ENCODE measurements at regions of chr3 and their contacts with region 1.

Region 1: DNA sequence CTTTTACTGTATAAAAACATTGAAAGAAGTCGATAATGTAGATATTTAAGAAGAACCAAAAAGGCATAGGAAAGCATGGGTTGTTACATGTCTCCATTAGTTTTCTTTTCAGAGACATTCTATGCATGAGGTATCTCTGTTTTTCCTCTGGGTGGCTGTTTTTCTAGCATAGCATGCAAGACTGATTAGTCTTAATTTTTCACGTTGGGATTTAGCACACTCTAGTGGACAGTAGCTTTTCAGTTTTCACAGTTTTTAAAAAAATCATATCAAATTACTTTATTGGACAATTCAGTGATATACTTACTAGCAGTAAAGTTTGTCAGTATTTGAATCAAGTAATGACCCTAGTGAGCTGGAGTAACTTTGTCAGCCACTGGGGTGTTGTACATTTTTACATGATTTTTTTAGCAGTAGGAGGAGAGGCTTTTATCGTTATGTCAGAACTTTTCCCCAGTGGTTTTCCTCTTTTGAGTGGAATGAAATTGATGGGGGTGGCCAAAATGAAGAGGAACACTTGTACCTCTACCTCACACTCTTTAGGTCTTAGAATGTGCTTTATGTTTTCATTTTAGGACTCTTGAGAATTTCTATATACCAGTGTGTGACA is 57.2 kb downstream of the SEC22A start:
- DNase-seq: no peak
- ATAC-seq: no peak
- H3K4me3 ChIP-seq: no peak overlapping the region
- H3K27ac ChIP-seq: no peak overlapping the region
- H3K4me1 ChIP-seq: no peaks in the 10 kb centered on the region
- H3K27me3 ChIP-seq: no peaks in the 10 kb centered on the region
- CTCF ChIP-seq: peak in 2 of 5 experiments; percentile 47 to 49
- POLR2A ChIP-seq: no peak

Region 2: GRCh38 chr3:122942937-122943827 is 315.7 kb before region 1 on chr3:
- in situ Hi-C with region 1: loop called in 2 of 4 experiments (anchors 25 kb)
- intact Hi-C with region 1: loop called (anchors 2 kb)
- DNase-seq: peak; percentile 13 to 37
- ATAC-seq: peak; percentile 53 to 78
- H3K4me3 ChIP-seq: no peak overlapping the region
- H3K27ac ChIP-seq: no peak overlapping the region
- H3K4me1 ChIP-seq: no peaks in the 10 kb centered on the region
- H3K27me3 ChIP-seq: no peaks in the 10 kb centered on the region
- CTCF ChIP-seq: peak; percentile 73 to 85 (median 80)
- POLR2A ChIP-seq: no peak

Region 3: DNA sequence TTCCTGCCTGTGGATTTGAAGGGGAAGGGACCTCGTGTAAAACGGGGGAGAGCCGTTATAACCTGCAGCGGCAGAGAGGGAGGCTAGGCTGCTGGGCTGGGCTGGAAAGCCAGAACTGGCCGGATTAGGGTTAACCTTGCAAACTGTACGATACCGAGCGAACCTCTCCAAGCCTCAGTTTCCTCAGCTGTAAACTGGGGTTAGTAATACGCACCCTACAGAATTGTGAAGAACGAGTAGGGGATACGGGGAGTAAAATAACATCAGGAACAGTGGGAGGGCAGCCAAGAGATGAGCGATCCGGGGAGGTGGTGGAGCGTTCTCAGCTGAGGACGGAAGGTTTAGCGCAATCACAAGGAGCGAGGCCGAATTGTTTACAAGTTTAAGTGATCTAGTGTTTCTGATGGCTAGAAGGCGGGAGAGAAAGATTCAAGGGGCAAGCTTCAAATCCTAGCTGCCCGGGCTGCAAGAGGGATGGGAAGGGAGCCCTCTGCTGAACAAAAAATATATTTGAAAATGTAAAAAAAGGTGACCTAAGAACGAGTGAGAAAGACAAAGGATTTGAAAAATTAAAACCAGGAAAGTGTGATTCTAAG is 230.6 kb before region 1 on chr3:
- in situ Hi-C with region 1: no loop called
- intact Hi-C with region 1: loop called (anchors 5 kb)
- DNase-seq: no peak
- ATAC-seq: peak; percentile 53 to 55
- H3K4me3 ChIP-seq: peak overlapping the region; percentile 57 to 66 (median 64)
- H3K27ac ChIP-seq: peak overlapping the region in 1 of 4 donors; percentile 32
- H3K4me1 ChIP-seq: peaks cover 16 to 23% of the 10 kb centered on the region in 2 donors
- H3K27me3 ChIP-seq: peaks cover 43 to 65% (median 48%) of the 10 kb centered on the region in 3 donors
- CTCF ChIP-seq: peak in 2 of 5 experiments; percentile 22 to 28
- POLR2A ChIP-seq: no peak

Region 4: DNA sequence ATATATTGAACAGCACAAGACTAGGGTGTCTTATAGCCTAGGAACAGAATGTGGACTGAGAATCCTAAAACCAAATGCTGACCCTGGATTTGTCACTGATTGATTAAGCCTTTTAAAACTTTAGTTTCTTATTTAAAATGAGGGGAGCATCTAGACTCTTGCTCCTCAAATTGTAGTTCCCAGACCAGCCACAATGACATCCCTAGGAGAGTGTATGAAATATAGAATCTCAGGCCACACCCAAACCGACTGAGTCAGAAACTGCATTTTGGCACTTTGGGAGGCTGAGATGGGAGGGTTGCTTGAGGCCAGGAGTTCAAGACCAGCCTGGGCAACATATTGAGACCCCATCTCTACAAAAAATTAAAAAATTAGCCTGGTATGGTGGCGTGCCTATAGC is 1183.5 kb after region 1 on chr3:
- in situ Hi-C with region 1: no loop called
- intact Hi-C with region 1: no loop called
- DNase-seq: no peak
- ATAC-seq: no peak
- H3K4me3 ChIP-seq: no peak overlapping the region
- H3K27ac ChIP-seq: no peak overlapping the region
- H3K4me1 ChIP-seq: no peaks in the 10 kb centered on the region
- H3K27me3 ChIP-seq: no peaks in the 10 kb centered on the region
- CTCF ChIP-seq: no peak
- POLR2A ChIP-seq: no peak